A549 (cell line): ENCODE measurements at regions of chr19 and their contacts with region 1.

Region 1: DNA sequence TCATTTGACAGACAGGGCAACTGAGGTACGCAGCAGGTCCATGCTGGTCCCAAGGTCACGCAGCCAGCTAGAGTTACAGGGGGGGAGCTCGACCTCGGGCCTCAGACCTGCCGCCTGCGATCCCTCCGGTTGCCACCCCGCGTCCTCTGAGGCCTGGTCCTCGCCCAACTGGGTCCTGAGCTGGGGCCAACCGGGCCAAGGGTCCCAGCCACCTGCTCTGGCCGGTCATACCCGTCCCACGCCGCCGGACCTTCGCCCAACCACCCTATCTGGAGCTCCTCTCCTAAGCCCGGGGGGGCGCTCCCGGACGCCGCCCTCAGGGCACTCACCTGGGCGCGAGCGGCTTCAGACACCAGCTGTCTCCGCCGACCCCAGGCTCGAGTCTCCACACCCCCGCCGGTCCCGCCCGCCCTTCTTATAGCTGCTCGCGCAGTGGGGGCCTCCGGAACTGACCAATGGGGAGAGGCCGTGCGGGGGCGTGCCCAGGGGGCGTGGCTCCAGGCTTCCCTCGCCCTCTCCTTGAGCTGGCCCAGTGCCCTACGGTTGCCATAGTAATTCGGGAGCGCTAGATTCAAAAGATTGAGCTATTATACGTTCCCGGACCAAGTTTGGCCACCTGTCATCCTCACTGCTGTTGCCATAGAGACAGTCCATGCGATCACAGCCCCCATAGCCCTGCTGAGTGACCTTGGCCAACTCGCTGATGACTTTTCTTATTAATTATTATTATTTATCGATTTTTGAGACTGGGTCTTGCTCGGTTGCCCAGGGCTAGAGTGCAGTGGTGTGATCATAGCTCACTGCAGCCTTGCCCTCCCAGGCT is at the start of gene PLIN5:
- DNase-seq: peak; percentile 65 to 66
- ATAC-seq: peak; percentile 61 to 83
- H3K4me3 ChIP-seq: peak within 1 kb of the TSS; percentile 32; the same call in 1 of the 3 replicates
- H3K27ac ChIP-seq: 0 out of 6 replicates have a peak within 1 kb of the TSS, but pooled peaks of 1 of the 2 experiments have one; percentile 28
- H3K4me1 ChIP-seq: no peaks in the 10 kb centered on the region
- CTCF ChIP-seq: no peak
- EP300 ChIP-seq: no peak
- POLR2A ChIP-seq: no peak
- RAD21 ChIP-seq: no peak
- polyA plus RNA-seq, gene PLIN5: 0.04 and 0.25 TPM in 2 replicates

Region 2: DNA sequence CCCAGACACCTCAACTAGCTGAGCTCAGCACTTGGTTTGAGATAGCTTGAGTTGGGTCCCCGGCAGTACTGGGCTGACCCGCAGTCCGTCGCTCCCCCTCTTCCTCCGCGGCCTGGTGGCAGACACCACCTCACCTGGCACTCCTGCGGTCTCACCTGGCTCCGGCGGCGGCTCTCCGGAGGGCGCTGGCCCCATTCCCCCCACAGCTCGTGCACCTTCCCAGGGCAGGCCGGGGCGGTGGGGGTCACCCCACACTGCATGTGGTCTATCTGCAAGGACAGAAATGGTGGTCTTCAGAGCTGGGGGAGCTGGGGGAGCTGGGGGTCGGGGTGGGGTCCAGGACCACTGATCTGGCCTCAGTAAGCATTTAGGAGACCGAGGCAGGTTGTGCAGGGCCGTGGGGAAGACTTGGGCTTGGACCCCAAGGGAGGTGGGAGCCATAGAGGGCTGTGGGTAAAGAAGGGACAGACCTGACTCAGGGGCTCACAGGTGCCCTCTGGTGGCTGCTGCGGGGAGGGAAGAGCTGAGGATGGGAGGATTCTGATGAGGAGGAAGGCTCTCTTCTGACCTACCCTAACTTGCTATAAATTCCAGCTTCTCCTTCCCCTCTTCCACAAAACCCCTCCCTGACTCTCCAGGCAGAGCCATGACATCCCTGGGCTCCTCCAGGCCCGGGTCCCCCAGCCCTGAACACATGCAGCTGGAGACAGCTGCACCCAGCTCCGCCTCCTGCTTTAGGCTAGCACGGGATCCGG is 10.1 kb before region 1 on chr19:
- CTCF ChIA-PET with region 1: interaction called, 51 read pairs
- POLR2A ChIA-PET with region 1: interaction called, 4 read pairs
- DNase-seq: peak; percentile 51 to 63
- ATAC-seq: peak; percentile 82 to 84
- H3K4me3 ChIP-seq: no peak overlapping the region
- H3K27ac ChIP-seq: no peak overlapping the region
- H3K4me1 ChIP-seq: peaks cover 5% of the 10 kb centered on the region; the same call in 1 of the 3 replicates
- CTCF ChIP-seq: peak; percentile 54
- EP300 ChIP-seq: no peak
- POLR2A ChIP-seq: no peak
- RAD21 ChIP-seq: peak; percentile 34; a peak in 4 of 5 replicates

Region 3: GRCh38 chr19:4547303-4548237 is 12.5 kb after region 1 on chr19:
- CTCF ChIA-PET with region 1: interaction called, 15 read pairs
- POLR2A ChIA-PET with region 1: no interaction called
- DNase-seq: peak in 1 of 2 experiments; percentile 59
- ATAC-seq: peak; percentile 67 to 85
- H3K4me3 ChIP-seq: no peak overlapping the region
- H3K27ac ChIP-seq: no peak overlapping the region
- H3K4me1 ChIP-seq: peaks cover 4% of the 10 kb centered on the region; the same call in 1 of the 3 replicates
- CTCF ChIP-seq: peak; percentile 36
- EP300 ChIP-seq: no peak
- POLR2A ChIP-seq: no peak
- RAD21 ChIP-seq: no peak